CD8-positive, alpha-beta T cell (primary cell): ENCODE measurements at regions of chr12 and their contacts with region 1.

Region 1: DNA sequence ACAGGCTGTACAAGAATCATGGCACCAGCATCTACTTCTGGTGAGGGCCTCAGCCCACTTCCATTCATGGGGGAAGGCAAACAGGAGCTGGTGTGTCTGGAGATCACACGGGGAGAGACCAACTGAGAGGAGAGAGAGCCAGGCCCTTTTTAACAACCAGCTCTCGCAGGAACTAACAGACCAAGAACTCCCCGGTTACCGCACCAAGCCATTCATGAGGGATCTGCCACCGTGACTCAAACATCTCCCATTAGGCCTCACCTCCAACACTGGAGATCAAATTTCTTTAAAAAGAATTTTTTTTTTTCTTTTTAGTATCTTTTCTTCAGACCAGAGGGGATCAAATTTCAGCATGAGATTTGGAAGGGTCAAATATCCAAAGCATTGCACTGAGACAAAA is 16.7 kb upstream of the AQP2 start:
- DNase-seq: no peak
- ATAC-seq: no peak
- H3K4me3 ChIP-seq: no peak overlapping the region
- H3K4me3 Mint-ChIP-seq: no peak overlapping the region
- H3K27ac ChIP-seq: no peak overlapping the region
- H3K27ac Mint-ChIP-seq: no peak overlapping the region
- H3K4me1 ChIP-seq: no peaks in the 10 kb centered on the region
- H3K4me1 Mint-ChIP-seq: no peaks in the 10 kb centered on the region
- H3K27me3 ChIP-seq: no peaks in the 10 kb centered on the region
- H3K27me3 Mint-ChIP-seq: peaks cover 2% of the 10 kb centered on the region
- CTCF ChIP-seq: no peak

Region 2: GRCh38 chr12:49945394-49946080 is 11.7 kb after region 1 on chr12:
- CTCF ChIA-PET with region 1: interaction called, 17 read pairs
- POLR2A ChIA-PET with region 1: no interaction called
- intact Hi-C with region 1: no loop called
- DNase-seq: peak; percentile 59 to 86 (median 80)
- ATAC-seq: peak; percentile 97
- H3K4me3 ChIP-seq: peak overlapping the region in 1 of 2 experiments; percentile 34
- H3K4me3 Mint-ChIP-seq: peak overlapping the region; percentile 84
- H3K27ac ChIP-seq: no peak overlapping the region
- H3K27ac Mint-ChIP-seq: peak overlapping the region; percentile 78
- H3K4me1 ChIP-seq: no peaks in the 10 kb centered on the region
- H3K4me1 Mint-ChIP-seq: peaks cover 15% of the 10 kb centered on the region
- H3K27me3 ChIP-seq: no peaks in the 10 kb centered on the region
- H3K27me3 Mint-ChIP-seq: peaks cover 6% of the 10 kb centered on the region
- CTCF ChIP-seq: peak; percentile 82

Region 3: DNA sequence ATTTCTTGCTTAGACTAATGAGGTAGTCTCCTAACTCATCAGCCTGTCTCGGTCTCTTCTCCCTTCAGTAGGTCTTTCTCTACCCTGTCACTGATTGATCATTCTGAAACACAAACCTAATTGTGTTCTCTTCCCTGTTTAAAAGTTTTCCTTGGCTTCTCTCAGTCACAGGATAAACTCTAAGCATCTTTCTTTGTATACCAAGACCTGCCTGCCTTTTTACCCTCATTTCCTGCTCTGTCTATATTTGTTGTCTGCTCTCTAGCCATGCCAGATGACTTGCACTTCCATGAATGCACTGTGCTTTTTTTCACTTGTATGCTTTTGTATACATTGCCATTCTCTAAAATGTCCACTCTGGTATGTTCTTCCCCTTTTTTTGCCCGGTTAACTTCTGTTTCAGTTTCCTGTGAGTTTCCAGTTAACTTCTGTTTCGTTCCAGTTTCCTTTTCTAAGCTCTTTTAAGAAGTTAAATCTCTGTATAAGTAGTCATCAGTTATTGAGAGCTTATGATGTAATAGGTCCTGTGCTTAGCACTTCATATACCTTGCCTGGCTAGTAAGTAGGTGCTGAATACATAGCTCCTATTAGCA is 583.8 kb after region 1 on chr12:
- CTCF ChIA-PET with region 1: no interaction called
- POLR2A ChIA-PET with region 1: no interaction called
- intact Hi-C with region 1: no loop called
- DNase-seq: peak in 1 of 9 experiments; percentile 47
- ATAC-seq: peak; percentile 77
- H3K4me3 ChIP-seq: no peak overlapping the region
- H3K4me3 Mint-ChIP-seq: no peak overlapping the region
- H3K27ac ChIP-seq: peak overlapping the region; percentile 7 to 23
- H3K27ac Mint-ChIP-seq: no peak overlapping the region
- H3K4me1 ChIP-seq: peaks cover 84% of the 10 kb centered on the region
- H3K4me1 Mint-ChIP-seq: peaks cover 70% of the 10 kb centered on the region
- H3K27me3 ChIP-seq: no peaks in the 10 kb centered on the region
- H3K27me3 Mint-ChIP-seq: no peaks in the 10 kb centered on the region
- CTCF ChIP-seq: no peak